ENCODE measurements at regions of chr2 and their contacts with region 1.

Region 1: DNA sequence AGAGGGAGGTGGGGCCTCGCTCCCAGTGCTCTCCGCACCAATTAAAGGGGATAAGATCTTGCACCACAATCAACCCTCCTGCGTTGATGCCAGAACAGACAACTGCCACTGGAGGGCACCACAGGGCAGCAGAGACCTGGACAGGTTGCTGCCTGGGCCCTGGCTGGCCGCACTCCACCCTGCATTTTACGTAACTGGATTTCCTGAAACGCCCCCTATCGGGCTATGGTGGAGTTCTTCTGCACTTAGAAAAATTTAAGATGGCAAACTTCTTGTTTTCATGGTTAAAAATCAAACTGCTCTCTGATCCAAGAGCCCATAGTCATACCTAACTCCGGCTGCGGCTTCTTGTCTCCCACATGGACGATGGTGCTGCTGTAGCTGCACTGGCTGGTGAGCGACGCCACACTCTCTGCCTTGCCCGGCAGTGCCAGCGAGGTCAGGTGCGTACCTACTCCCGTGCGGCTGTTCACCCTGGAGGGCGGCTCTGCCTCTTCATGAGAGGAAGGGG is 16.8 kb upstream of the HES6 start:
- DNase-seq: peak; percentile 37 to 85 (median 72)
- ATAC-seq: peak; percentile 95
- H3K4me3 ChIP-seq: no peak overlapping the region
- H3K4me3 Mint-ChIP-seq: no peak overlapping the region
- H3K27ac ChIP-seq: no peak overlapping the region
- H3K27ac Mint-ChIP-seq: no peak overlapping the region
- H3K4me1 ChIP-seq: no peaks in the 10 kb centered on the region
- H3K4me1 Mint-ChIP-seq: no peaks in the 10 kb centered on the region
- H3K27me3 ChIP-seq: no peaks in the 10 kb centered on the region
- H3K27me3 Mint-ChIP-seq: no peaks in the 10 kb centered on the region
- CTCF ChIP-seq: peak; percentile 80

Region 2: DNA sequence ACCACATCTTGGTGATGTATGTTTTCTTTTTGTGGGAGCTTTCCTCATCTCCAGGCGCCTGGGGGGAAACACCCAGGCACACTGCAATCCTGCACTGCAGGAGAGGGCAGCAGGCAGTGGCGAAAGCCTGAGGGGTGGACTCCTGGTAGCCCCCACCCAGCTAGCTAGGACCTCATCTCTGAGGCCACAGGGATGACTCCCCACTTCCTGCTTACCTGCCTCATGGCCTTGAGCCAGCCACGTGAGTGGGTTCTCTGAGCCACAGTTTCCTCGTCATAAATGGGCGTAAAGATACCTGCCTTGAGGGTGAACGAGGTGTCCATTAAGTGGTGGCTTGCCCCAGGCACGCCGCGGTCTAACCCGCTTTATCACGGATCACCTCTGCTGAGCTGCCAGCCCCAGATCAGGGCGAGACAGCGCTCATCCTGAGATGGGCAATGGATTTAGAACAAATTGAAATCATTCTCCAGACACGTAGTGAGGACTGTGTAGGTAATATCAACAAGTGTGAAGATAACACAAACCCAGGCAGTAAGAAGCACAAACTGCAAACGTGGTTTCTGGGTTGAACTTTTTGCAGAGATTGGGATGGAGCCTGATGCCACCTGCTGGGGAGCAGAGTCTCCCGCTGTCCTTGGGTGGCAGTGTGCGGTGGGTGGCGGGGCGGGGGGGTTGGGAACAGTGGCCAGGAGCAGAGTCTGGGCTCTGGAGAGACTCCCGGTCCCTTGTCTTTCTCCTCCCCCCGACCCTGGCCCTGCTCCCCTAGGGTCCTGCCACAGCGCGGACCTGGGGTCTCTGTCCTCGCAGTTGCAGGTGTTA is 83.0 kb after region 1 on chr2:
- CTCF ChIA-PET with region 1: no interaction called
- POLR2A ChIA-PET with region 1: no interaction called
- intact Hi-C with region 1: loop called in 1 of 2 experiments (anchors 2 kb)
- DNase-seq: peak in 1 of 9 experiments; percentile 28
- ATAC-seq: peak; percentile 31
- H3K4me3 ChIP-seq: no peak overlapping the region
- H3K4me3 Mint-ChIP-seq: no peak overlapping the region
- H3K27ac ChIP-seq: no peak overlapping the region
- H3K27ac Mint-ChIP-seq: no peak overlapping the region
- H3K4me1 ChIP-seq: peaks cover 5% of the 10 kb centered on the region
- H3K4me1 Mint-ChIP-seq: peaks cover 8% of the 10 kb centered on the region
- H3K27me3 ChIP-seq: no peaks in the 10 kb centered on the region
- H3K27me3 Mint-ChIP-seq: no peaks in the 10 kb centered on the region
- CTCF ChIP-seq: no peak

Region 3: DNA sequence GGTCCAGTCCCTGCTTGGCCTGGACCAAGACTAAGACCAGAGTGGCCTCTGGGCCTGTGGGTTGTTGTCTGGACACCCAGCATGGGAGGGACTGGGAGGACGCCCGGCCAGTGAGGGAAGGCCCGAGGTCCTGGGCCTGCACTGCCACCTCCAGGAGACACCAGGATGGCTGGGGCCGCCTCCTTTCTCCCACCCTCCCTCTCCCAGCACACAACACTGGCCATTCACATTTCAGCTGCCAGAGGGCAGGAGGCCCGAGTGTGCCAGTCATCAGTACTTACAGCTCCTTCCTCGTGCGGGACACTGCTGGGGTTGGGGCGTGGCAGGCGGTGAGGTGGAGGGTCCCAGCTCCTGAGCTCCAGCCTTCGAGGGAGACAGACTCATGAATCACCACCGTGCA is 303.6 kb after region 1 on chr2:
- CTCF ChIA-PET with region 1: no interaction called
- POLR2A ChIA-PET with region 1: no interaction called
- intact Hi-C with region 1: no loop called
- DNase-seq: no peak
- ATAC-seq: no peak
- H3K4me3 ChIP-seq: no peak overlapping the region
- H3K4me3 Mint-ChIP-seq: no peak overlapping the region
- H3K27ac ChIP-seq: no peak overlapping the region
- H3K27ac Mint-ChIP-seq: no peak overlapping the region
- H3K4me1 ChIP-seq: no peaks in the 10 kb centered on the region
- H3K4me1 Mint-ChIP-seq: no peaks in the 10 kb centered on the region
- H3K27me3 ChIP-seq: no peaks in the 10 kb centered on the region
- H3K27me3 Mint-ChIP-seq: peaks cover 8% of the 10 kb centered on the region
- CTCF ChIP-seq: no peak